MCF 10A (cell line): ENCODE measurements at regions of chr18 and their contacts with region 1.

Region 1: DNA sequence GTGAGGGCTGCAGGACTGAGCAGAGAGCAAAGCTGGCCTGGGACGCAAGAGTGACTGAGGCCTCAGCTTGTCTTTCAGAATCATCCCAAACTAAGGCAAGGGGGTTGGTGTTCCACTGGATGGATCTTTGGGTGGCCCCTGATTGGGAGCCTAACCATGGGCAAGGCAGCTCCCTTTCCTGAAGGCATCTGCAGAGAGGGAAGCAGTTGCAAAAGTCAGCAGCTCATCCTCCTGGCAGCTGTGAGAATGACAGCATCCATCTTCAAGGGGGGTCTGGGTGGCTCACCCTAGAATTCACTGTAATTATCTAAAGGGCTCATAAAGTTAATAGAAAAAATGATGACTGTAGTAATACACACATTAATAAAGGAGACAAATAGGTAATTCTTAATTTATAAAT is 46.5 kb upstream of the RAB31 start:
- DNase-seq: peak; percentile 36
- H3K4me3 Mint-ChIP-seq: no peak overlapping the region
- H3K27ac Mint-ChIP-seq: no peak overlapping the region
- H3K4me1 Mint-ChIP-seq: peaks cover 16% of the 10 kb centered on the region
- H3K27me3 Mint-ChIP-seq: no peaks in the 10 kb centered on the region
- CTCF ChIP-seq: peak; percentile 27

Region 2: GRCh38 chr18:9643549-9643948 is 18.0 kb before region 1 on chr18:
- CTCF ChIA-PET with region 1: no interaction called
- POLR2A ChIA-PET with region 1: interaction called, 16 read pairs
- intact Hi-C with region 1: no loop called
- DNase-seq: peak; percentile 84
- H3K4me3 Mint-ChIP-seq: peak overlapping the region; percentile 4
- H3K27ac Mint-ChIP-seq: peak overlapping the region; percentile 96
- H3K4me1 Mint-ChIP-seq: peaks cover 19% of the 10 kb centered on the region
- H3K27me3 Mint-ChIP-seq: no peaks in the 10 kb centered on the region
- CTCF ChIP-seq: no peak

Region 3: DNA sequence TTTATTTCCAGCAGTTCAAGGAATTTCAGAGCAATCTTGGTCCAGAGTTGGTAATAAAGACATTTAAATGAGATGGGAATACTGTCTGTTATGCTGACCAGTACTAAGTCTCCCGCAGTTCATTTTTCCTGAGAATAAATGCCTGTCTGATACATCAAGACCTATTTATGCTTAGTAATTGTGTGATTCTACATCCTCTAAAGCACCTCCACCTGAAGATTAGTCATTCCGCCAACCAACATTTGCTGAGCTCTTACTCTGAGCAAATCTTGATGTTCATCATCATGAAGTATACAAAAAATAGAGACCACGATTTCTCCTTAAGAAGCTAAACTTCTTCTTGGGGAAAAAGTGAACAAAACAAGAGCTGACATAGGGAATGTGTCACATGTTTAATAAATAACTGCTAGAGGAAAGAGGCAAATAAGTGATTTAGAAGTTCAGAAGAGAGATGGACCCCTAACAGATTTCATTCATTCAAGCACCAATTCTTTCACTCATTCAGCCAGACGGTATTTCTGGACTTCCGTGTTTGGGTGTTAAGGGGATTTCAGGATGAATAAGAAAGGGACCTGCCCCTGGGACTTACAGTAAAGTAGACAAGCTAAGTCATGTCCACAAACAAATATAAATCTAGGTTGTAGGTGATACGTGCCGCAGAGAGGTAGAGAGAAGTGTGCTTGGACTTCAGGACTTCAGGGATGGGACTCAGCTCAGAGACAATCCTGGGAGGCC is 13.0 kb before region 1 on chr18:
- CTCF ChIA-PET with region 1: no interaction called
- POLR2A ChIA-PET with region 1: interaction called, 16 read pairs
- intact Hi-C with region 1: no loop called
- DNase-seq: peak; percentile 50
- H3K4me3 Mint-ChIP-seq: no peak overlapping the region
- H3K27ac Mint-ChIP-seq: peak overlapping the region; percentile 97
- H3K4me1 Mint-ChIP-seq: peaks cover 30% of the 10 kb centered on the region
- H3K27me3 Mint-ChIP-seq: no peaks in the 10 kb centered on the region
- CTCF ChIP-seq: no peak

Region 4: GRCh38 chr18:9673296-9674251 is 12.0 kb after region 1 on chr18:
- CTCF ChIA-PET with region 1: interaction called, 5 read pairs
- POLR2A ChIA-PET with region 1: interaction called, 37 read pairs
- intact Hi-C with region 1: no loop called
- DNase-seq: peak; percentile 93
- H3K4me3 Mint-ChIP-seq: peak overlapping the region; percentile 43
- H3K27ac Mint-ChIP-seq: peak overlapping the region; percentile 94
- H3K4me1 Mint-ChIP-seq: peaks cover 17% of the 10 kb centered on the region
- H3K27me3 Mint-ChIP-seq: no peaks in the 10 kb centered on the region
- CTCF ChIP-seq: peak; percentile 21

Region 5: DNA sequence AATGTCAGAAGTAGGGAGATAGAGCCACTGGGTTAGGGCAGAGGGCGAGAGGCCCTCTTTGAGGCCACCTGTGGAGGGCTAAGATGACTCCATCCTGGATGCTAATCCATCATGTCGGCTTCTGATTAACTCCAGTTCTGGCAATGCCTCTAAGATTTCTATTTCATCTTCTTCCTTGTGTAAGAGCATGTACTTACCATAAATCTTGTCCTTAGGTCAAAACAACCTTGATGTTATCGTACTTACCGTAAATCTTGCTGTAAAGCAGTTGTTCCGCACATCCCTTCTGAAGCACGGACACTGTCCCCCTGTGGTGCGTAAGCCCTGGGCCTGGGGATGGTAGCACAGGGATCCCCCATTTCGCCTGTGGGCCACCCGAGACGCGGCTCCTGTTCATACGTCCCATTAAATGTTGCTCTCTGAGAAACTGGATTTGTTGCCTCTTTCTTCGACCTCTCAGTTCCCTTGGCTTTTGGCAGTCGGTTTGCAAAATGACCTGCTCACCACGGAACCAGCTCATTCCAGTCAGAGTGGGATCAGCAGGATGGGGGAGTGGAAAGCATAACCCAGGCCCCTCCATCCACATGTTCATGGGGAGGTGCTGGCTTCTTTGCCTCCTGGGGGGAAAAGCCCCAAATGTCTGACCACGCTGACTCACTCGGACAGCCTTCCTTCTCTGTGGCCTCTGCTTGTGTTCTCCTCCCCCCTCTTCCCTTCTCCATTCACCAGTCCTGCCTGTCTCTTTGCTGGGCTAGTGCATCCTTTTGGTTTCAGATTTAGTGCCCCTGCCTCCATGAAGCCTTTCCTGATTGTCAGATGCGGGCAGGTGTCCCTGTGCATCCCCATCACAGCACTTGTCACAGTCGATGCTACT is 96.4 kb after region 1 on chr18:
- CTCF ChIA-PET with region 1: no interaction called
- POLR2A ChIA-PET with region 1: no interaction called
- intact Hi-C with region 1: no loop called
- DNase-seq: peak; percentile 28
- H3K4me3 Mint-ChIP-seq: no peak overlapping the region
- H3K27ac Mint-ChIP-seq: no peak overlapping the region
- H3K4me1 Mint-ChIP-seq: peaks cover 7% of the 10 kb centered on the region
- H3K27me3 Mint-ChIP-seq: no peaks in the 10 kb centered on the region
- CTCF ChIP-seq: no peak